PC-9 (cell line): ENCODE measurements at regions of chr1 and their contacts with region 1.

Region 1: DNA sequence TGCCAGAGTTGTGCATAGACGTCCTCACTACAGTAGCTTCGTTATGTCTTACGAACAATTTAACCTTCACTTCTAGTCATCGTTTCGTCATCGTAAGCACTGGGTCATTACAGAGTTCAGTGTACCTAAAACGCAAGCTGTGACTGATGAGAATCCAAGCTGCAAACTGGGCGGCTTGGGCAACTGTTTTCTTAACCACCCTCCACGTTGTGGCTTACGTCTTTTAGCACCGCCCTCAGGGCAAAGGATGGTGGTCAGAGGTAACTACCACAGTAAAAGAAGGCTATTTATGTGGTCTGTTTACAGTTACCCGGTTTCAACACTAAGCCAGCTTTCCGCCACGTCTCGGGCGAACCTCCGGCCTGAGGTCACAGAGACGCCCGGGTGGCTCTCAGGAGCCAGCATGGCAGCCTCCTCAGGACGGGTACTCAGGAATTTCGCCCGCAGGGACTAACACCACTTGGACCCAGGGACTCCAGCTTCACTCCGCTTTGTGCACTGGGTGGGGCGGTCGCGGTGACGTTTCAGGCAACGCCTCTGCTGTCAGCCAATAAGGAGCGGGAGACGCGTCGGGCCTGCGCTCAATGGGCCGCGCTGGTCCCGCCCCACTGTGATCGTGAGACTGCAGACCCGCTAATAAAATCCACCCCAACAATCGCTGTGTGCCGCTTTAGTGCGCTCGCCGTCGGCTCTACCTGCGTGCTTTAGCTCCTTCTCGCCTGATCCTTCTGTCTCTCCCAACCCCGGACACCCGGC is at the start of gene CTH:
- DNase-seq: peak; percentile 98
- H3K4me3 ChIP-seq: peak within 1 kb of the TSS; percentile 83
- H3K27ac ChIP-seq: peak within 1 kb of the TSS; percentile 81
- H3K4me1 ChIP-seq: peaks cover 22% of the 10 kb centered on the region
- H3K27me3 ChIP-seq: no peaks in the 10 kb centered on the region
- CTCF ChIP-seq: no peak
- total RNA-seq, gene CTH: 21.7 and 33.9 TPM in 2 replicates

Region 2: DNA sequence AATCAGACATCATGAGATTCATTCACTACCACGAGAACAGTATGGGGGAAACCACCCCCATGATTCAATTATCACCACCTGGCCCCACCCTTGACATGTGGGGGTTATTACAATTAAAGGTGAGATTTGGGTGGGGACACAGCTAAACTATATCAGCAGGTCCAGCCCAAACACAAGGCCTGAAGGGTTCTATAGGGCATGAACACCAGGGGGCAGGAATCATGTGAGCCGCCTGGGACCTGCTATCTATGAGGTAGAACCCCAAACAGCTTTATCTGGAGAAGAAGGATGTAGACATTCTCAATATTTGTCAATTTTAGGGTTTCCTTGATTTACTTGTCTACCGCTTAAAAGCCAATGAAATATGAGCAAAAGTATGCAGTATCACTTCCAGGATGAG is 1619.0 kb before region 1 on chr1:
- CTCF ChIA-PET with region 1: no interaction called
- POLR2A ChIA-PET with region 1: no interaction called
- intact Hi-C with region 1: no loop called
- DNase-seq: no peak
- H3K4me3 ChIP-seq: no peak overlapping the region
- H3K27ac ChIP-seq: no peak overlapping the region
- H3K4me1 ChIP-seq: no peaks in the 10 kb centered on the region
- H3K27me3 ChIP-seq: no peaks in the 10 kb centered on the region
- CTCF ChIP-seq: no peak

Region 3: DNA sequence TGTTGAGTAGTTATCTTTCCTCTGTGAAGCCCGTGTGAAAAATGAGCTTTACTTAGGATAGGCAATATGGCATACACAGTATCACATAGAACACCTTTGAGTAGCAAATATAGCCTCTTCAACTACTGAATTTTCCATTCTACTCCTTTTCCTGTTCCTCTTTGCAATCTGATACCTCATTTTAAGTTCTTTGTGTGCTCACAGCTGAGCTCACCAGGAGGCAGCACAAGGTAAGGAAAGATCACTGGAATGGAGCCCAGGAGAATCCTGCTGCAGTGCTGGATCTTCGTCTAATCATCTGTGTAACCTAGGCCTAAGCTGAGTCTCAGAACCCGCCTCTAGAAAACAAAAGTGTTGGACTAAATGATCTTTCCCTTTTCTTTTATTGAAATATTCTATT is 376.4 kb before region 1 on chr1:
- CTCF ChIA-PET with region 1: no interaction called
- POLR2A ChIA-PET with region 1: no interaction called
- intact Hi-C with region 1: loop called (anchors 10 kb)
- DNase-seq: peak in 1 of 2 experiments; percentile 43
- H3K4me3 ChIP-seq: no peak overlapping the region
- H3K27ac ChIP-seq: no peak overlapping the region
- H3K4me1 ChIP-seq: no peaks in the 10 kb centered on the region
- H3K27me3 ChIP-seq: no peaks in the 10 kb centered on the region
- CTCF ChIP-seq: no peak; the same call in 1 of the 2 replicates

Region 4: DNA sequence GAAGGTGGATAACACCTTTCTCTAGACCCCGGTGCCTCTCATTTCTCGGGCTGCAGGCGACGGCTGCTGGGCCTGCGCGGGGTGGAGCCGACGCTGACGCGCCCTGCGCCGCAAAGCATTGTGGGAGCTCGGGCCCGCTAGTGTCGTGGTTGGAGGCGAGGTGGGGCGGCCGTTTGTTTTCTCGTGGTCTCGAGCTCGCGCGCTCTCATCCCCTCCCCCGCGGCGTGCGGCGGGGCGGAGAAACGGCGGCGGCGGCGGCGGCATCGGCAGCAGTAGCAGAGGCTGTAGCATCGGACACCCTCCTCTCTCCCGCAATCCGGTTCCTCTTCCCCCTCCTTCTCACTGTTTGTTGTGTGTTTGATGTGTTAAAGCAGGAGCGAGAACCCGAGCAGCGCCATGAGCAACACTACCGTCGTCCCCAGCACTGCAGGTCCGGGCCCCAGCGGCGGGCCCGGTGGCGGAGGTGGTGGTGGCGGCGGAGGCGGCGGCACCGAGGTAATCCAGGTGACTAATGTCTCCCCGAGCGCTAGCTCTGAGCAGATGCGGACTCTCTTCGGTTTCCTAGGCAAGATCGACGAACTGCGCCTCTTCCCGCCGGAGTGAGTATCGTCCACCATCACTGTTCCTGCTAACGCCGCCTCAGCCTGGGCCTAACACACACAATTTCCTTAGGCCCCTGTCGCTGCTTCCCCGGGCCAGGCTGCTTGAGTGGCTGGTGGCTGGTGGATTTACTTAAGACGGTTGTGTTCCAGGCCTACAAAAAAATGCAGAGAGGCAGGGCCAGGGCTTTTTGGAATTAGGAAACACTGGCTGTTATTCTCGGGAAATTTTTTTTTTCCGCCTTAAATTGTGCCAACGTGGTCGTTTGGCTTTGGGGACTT is 189.3 kb before region 1 on chr1 and contains the start of gene SRSF11:
- CTCF ChIA-PET with region 1: no interaction called
- POLR2A ChIA-PET with region 1: no interaction called
- intact Hi-C with region 1: loop called (anchors 2 kb)
- DNase-seq: peak; percentile 82 to 97
- H3K4me3 ChIP-seq: peak within 1 kb of the TSS; percentile 66
- H3K27ac ChIP-seq: peak within 1 kb of the TSS; percentile 93
- H3K4me1 ChIP-seq: peaks cover 17% of the 10 kb centered on the region
- H3K27me3 ChIP-seq: no peaks in the 10 kb centered on the region
- CTCF ChIP-seq: no peak
- total RNA-seq, gene SRSF11: 153 and 199 TPM in 2 replicates

Region 5: DNA sequence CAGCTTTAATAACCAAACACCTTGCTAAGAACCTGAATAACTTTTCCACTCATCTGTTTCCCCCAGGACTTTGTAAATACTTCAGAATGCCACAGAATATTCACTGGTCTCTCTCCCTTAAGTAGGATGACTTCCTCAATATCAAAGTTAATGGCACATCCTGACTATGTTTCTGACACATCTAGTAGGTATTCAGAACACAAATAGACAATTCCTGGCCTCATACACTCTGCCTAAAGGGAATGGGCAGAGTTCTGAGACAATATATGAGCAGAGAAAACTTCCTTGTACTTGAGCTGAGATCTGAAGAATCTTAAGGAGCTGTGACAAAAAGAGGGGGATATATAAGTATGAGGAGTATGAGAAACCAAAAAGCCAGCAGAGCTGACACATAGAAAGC is 91.0 kb before region 1 on chr1:
- CTCF ChIA-PET with region 1: no interaction called
- POLR2A ChIA-PET with region 1: no interaction called
- intact Hi-C with region 1: loop called (anchors 5 kb)
- DNase-seq: peak; percentile 14 to 95
- H3K4me3 ChIP-seq: no peak overlapping the region
- H3K27ac ChIP-seq: peak overlapping the region; percentile 71
- H3K4me1 ChIP-seq: peaks cover 33% of the 10 kb centered on the region
- H3K27me3 ChIP-seq: no peaks in the 10 kb centered on the region
- CTCF ChIP-seq: no peak

Region 6: GRCh38 chr1:70376196-70376595 is 34.6 kb before region 1 on chr1:
- CTCF ChIA-PET with region 1: no interaction called
- POLR2A ChIA-PET with region 1: no interaction called
- intact Hi-C with region 1: loop called (anchors 1 kb)
- DNase-seq: no peak
- H3K4me3 ChIP-seq: no peak overlapping the region
- H3K27ac ChIP-seq: no peak overlapping the region
- H3K4me1 ChIP-seq: peaks cover 14% of the 10 kb centered on the region
- H3K27me3 ChIP-seq: no peaks in the 10 kb centered on the region
- CTCF ChIP-seq: no peak